PC-3 (cell line): ENCODE measurements at regions of chr2 and their contacts with region 1.

Region 1: GRCh38 chr2:60756191-60757041 is at the start of gene PAPOLG:
- DNase-seq: peak; percentile 96
- ATAC-seq: peak; percentile 67
- H3K4me3 ChIP-seq: peak within 1 kb of the TSS; percentile 94
- H3K27ac ChIP-seq: peak within 1 kb of the TSS; percentile 42
- H3K4me1 ChIP-seq: peaks cover 10% of the 10 kb centered on the region
- H3K27me3 ChIP-seq: no peaks in the 10 kb centered on the region
- CTCF ChIP-seq: no peak
- total RNA-seq, gene PAPOLG: 7.1 and 8.8 TPM in 2 replicates

Region 2: DNA sequence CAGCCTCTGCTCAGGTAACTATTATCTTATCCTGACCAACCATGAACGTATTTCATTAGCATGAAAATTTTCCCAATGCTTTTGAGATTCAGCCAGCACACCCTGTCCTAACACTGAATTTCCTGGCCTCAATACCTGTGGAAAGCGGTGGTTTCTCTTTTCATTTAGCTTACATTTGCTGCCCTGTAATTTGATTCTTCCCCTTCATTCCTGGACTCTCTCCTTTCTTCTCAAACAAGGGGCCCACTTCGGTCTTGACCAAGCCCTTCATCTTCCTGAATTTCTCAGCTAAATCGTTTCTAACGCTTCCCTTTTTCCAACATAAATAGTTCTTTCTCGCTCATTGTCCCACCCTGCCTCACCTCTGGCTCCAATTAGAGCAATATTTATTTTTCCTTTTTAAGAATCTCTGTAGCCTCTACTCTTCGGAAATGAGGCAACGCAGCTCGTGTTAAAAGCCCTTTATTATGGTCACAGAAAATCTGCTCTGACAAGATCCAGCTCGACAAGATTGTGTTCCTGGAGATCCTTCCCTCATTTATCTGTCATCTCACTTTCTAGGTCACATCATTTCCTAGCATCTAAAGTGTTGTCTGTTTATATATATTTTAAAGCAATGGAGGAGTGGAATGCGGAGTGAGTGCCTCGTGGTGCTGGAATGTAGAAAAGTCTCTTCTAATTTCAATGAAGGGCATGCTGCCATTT is 153.4 kb before region 1 on chr2:
- CTCF ChIA-PET with region 1: no interaction called
- POLR2A ChIA-PET with region 1: no interaction called
- intact Hi-C with region 1: no loop called
- DNase-seq: no peak
- ATAC-seq: no peak
- H3K4me3 ChIP-seq: no peak overlapping the region
- H3K27ac ChIP-seq: no peak overlapping the region
- H3K4me1 ChIP-seq: no peaks in the 10 kb centered on the region
- H3K27me3 ChIP-seq: peaks cover 90% of the 10 kb centered on the region
- CTCF ChIP-seq: no peak

Region 3: DNA sequence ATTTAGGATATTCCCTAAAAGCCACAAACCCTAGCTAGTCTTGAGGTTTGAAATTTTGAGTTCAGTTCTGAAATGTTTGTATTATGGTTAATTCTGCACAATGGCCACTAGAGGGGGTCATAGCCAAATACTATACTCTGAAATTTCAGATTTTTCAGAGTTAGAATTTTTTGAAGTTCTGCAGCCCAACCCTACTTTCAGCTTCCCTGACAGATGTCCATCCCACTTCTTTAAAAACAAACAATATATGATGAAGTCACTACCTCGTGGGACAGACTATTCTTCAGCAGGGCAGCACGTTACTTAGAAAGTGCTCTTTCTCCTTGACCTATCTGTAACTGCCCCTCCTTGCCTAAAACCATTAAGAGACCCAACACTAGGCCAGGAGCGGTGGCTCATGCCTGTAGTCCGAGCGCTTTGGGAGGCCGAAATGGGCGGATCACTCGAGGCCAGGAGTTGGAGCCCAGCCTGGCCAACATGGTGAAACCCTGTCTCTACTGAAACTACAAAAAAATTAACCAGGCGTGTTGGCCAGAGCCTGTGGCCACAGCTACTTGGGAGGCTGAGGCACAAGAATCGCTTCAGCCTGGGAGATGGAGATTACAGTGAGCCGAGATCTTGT is 48.6 kb before region 1 on chr2:
- CTCF ChIA-PET with region 1: interaction called, 5 read pairs
- POLR2A ChIA-PET with region 1: no interaction called
- intact Hi-C with region 1: loop called (anchors 1 kb)
- DNase-seq: peak; percentile 69
- ATAC-seq: peak; percentile 40
- H3K4me3 ChIP-seq: no peak overlapping the region
- H3K27ac ChIP-seq: no peak overlapping the region
- H3K4me1 ChIP-seq: no peaks in the 10 kb centered on the region
- H3K27me3 ChIP-seq: no peaks in the 10 kb centered on the region
- CTCF ChIP-seq: peak; percentile 87

Region 4: GRCh38 chr2:60806988-60807681 is 50.7 kb after region 1 on chr2:
- CTCF ChIA-PET with region 1: no interaction called
- POLR2A ChIA-PET with region 1: no interaction called
- intact Hi-C with region 1: no loop called
- DNase-seq: peak; percentile 11
- ATAC-seq: peak; percentile 13; the same call in 1 of the 2 replicates
- H3K4me3 ChIP-seq: no peak overlapping the region
- H3K27ac ChIP-seq: no peak overlapping the region
- H3K4me1 ChIP-seq: no peaks in the 10 kb centered on the region
- H3K27me3 ChIP-seq: no peaks in the 10 kb centered on the region
- CTCF ChIP-seq: no peak

Region 5: GRCh38 chr2:60852282-60852860 is 96.0 kb after region 1 on chr2:
- CTCF ChIA-PET with region 1: no interaction called
- POLR2A ChIA-PET with region 1: no interaction called
- intact Hi-C with region 1: no loop called
- DNase-seq: no peak
- ATAC-seq: no peak
- H3K4me3 ChIP-seq: no peak overlapping the region
- H3K27ac ChIP-seq: no peak overlapping the region
- H3K4me1 ChIP-seq: peaks cover 9% of the 10 kb centered on the region; the same call in 1 of the 2 replicates
- H3K27me3 ChIP-seq: no peaks in the 10 kb centered on the region
- CTCF ChIP-seq: no peak